ENCODE measurements at regions of chr13 and their contacts with region 1.

Region 1: DNA sequence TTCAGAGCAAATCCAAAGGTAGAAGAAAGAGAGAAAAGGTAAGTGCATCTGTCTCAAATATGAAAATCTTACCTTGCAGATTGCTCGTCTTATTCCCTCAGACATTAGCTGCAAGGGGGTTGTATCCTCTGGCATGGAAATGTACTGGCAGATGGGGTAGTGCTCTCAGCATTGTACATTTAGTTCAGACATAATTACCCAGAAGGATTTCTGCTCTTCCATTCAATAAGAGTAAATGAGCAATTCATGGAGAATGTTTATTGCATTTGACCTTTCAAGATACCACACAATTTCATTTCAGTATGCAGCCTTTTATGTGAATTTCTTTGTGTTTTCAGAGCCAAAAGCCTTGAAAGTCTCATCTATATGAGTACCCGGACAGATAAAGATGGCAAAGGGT is 63.8 kb downstream of the SCEL start:
- DNase-seq: no peak
- ATAC-seq: no peak
- H3K4me3 ChIP-seq: no peak overlapping the region
- H3K27ac ChIP-seq: no peak overlapping the region
- H3K4me1 ChIP-seq: no peaks in the 10 kb centered on the region
- H3K27me3 ChIP-seq: no peaks in the 10 kb centered on the region
- CTCF ChIP-seq: no peak

Region 2: GRCh38 chr13:77751513-77752456 is 152.4 kb after region 1 on chr13:
- intact Hi-C with region 1: loop called in 1 of 2 experiments (anchors 5 kb)
- DNase-seq: no peak
- ATAC-seq: peak; percentile 42 to 84 (median 56)
- H3K4me3 ChIP-seq: no peak overlapping the region
- H3K27ac ChIP-seq: no peak overlapping the region
- H3K4me1 ChIP-seq: no peaks in the 10 kb centered on the region
- H3K27me3 ChIP-seq: no peaks in the 10 kb centered on the region
- CTCF ChIP-seq: peak; percentile 73